Activated naive CD4-positive, alpha-beta T cell treated with anti-CD3 and anti-CD28 coated beads for 36 hours (primary cell): ENCODE measurements at regions of chr7 and their contacts with region 1.

Region 1: GRCh38 chr7:76047811-76048667 is at the starts of genes MDH2 and STYXL1:
- DNase-seq: peak; percentile 95
- H3K4me3 Mint-ChIP-seq: peak within 1 kb of the TSS; percentile 98
- H3K27ac Mint-ChIP-seq: peak within 1 kb of the TSS; percentile 96
- H3K4me1 Mint-ChIP-seq: peaks cover 54% of the 10 kb centered on the region
- H3K27me3 Mint-ChIP-seq: no peaks in the 10 kb centered on the region
- total RNA-seq, gene MDH2: 325 TPM
- total RNA-seq, gene STYXL1: 27.6 to 28.1 TPM

Region 2: DNA sequence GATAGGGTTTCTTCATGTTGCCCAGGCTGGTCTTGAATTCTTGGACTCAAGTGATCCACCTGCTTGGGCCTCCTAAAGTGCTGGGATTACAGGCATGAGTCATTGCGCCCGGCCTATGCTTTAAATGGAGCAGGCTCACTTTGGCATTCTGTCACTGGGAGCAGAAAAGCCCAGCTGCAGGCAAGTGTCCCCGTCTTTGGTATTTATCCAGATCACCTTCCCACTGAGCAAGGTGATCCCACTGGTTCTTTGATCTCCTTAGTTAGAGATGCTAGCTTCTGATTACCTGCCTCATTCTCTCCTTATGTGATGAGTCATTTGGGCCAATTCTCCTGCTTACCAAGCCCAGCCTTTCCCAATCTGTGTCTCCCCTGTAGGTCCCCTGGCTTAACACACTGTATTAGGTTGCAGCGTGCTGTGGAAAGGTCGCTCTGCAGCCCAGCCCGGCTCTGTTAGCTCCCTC is 516.6 kb before region 1 on chr7:
- CTCF ChIA-PET with region 1: no interaction called
- intact Hi-C with region 1: loop called (anchors 5 kb)
- DNase-seq: no peak
- H3K4me3 Mint-ChIP-seq: no peak overlapping the region
- H3K27ac Mint-ChIP-seq: no peak overlapping the region
- H3K4me1 Mint-ChIP-seq: peaks cover 8% of the 10 kb centered on the region
- H3K27me3 Mint-ChIP-seq: no peaks in the 10 kb centered on the region

Region 3: DNA sequence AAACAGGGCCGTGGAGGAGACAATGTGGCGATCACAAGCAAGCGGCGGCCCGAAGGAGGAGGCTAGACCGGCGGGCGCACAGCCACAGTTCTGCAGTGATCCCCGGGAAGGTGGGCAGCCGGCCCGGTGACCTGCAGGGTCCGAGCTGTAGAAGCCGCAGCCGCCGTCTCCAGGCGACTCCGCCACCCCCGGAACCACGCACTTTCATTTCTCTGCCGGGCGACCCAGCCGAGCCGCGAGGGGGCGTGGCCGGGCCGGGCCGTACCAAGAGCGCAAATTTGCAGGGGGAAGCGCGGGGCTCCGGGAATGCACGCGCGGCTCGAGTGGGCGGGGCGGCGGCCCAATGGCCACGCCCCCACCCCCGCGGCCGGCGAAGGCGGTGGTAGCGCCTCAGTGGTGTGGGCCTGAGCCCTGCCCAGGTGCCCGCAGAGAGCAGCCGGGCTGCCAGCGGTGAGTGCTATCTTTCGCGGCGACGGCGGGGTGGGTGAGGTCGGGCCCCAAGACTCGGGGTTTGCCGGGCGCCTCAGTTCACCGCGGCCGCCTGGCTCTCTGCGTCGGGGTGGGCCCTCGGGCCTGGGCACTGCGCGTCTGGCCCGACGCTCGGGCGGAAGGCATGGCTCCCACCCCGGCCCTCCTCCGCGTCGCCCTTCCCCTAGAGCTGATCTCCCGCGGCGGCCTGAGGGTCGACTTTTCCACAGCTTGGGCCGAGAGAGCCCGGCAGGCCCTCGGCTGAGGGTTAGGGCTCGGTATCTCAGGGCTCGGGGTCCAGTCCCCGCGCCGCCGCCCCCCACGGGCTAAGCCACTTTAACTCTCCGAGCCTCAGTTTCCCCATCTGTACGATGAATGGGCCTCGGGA is 133.1 kb before region 1 on chr7 and contains the start of gene POR:
- CTCF ChIA-PET with region 1: no interaction called
- intact Hi-C with region 1: loop called (anchors 1 kb)
- DNase-seq: peak; percentile 94
- H3K4me3 Mint-ChIP-seq: peak within 1 kb of the TSS; percentile 88
- H3K27ac Mint-ChIP-seq: peak within 1 kb of the TSS; percentile 85
- H3K4me1 Mint-ChIP-seq: peaks cover 30% of the 10 kb centered on the region
- H3K27me3 Mint-ChIP-seq: no peaks in the 10 kb centered on the region
- total RNA-seq, gene POR: 22.9 to 26.0 TPM

Region 4: DNA sequence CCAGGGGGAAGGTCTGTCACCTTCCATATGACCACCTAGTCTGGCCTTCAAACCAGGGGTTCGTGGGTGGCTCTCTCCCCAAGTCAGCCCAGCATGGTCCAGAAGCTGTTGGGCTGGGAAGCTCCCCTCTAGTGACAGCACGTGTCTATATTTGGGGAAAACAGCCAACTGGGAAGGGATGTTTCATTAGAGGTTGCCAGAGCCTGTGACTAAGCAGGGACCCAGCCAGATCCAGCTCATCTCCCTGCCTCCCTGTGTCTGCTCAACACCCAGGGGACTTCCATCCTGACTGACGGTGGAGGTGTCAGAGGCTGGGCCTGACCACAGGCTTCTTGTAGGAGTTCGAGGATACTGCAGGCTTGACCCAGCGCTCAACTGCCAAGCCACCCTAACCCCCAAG is 10.7 kb before region 1 on chr7:
- CTCF ChIA-PET with region 1: no interaction called
- intact Hi-C with region 1: no loop called
- DNase-seq: no peak
- H3K4me3 Mint-ChIP-seq: no peak overlapping the region
- H3K27ac Mint-ChIP-seq: no peak overlapping the region
- H3K4me1 Mint-ChIP-seq: peaks cover 7% of the 10 kb centered on the region
- H3K27me3 Mint-ChIP-seq: no peaks in the 10 kb centered on the region

Region 5: GRCh38 chr7:76166404-76167255 is 118.6 kb after region 1 on chr7:
- CTCF ChIA-PET with region 1: no interaction called
- intact Hi-C with region 1: loop called (anchors 2 kb)
- DNase-seq: peak; percentile 94
- H3K4me3 Mint-ChIP-seq: peak overlapping the region; percentile 84
- H3K27ac Mint-ChIP-seq: peak overlapping the region; percentile 85
- H3K4me1 Mint-ChIP-seq: peaks cover 8% of the 10 kb centered on the region
- H3K27me3 Mint-ChIP-seq: no peaks in the 10 kb centered on the region